ENCODE measurements at regions of chr4 and their contacts with region 1.

Region 1: DNA sequence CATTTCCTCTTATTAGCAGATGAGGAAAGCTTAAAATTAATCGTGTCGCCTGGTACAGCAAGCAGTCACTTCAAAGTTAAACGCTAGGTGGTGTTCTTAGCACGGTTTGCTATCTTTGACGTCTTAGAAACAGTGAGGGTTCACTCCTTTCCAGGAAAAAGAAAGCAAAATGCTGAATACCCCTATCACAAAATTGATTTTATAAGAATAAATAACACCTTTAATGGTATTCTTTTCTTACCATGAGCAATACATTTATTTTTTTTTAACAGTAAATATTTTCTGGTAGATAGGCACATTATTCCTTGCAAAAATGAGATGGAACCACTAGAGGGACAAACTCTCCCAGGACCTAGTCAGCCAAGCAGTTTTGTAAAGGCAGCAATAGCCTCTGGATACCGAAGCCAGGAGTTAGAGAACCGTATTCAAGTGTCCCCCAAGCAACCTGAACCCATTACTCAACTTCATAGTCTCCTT is 153.9 kb downstream of the KDR start:
- DNase-seq: no peak
- H3K4me3 ChIP-seq: no peak overlapping the region
- H3K27ac ChIP-seq: no peak overlapping the region
- H3K4me1 ChIP-seq: no peaks in the 10 kb centered on the region
- H3K27me3 ChIP-seq: no peaks in the 10 kb centered on the region
- CTCF ChIP-seq: peak; percentile 45

Region 2: GRCh38 chr4:54840992-54841768 is 130.3 kb before region 1 on chr4:
- intact Hi-C with region 1: no loop called
- DNase-seq: peak; percentile 18
- H3K4me3 ChIP-seq: no peak overlapping the region
- H3K27ac ChIP-seq: no peak overlapping the region
- H3K4me1 ChIP-seq: no peaks in the 10 kb centered on the region
- H3K27me3 ChIP-seq: no peaks in the 10 kb centered on the region
- CTCF ChIP-seq: no peak

Region 3: GRCh38 chr4:55169352-55169961 is 197.9 kb after region 1 on chr4:
- intact Hi-C with region 1: no loop called
- DNase-seq: peak; percentile 34
- H3K4me3 ChIP-seq: no peak overlapping the region
- H3K27ac ChIP-seq: no peak overlapping the region
- H3K4me1 ChIP-seq: no peaks in the 10 kb centered on the region
- H3K27me3 ChIP-seq: no peaks in the 10 kb centered on the region
- CTCF ChIP-seq: no peak

Region 4: GRCh38 chr4:55321707-55322264 is 350.3 kb after region 1 on chr4:
- intact Hi-C with region 1: loop called (anchors 10 kb)
- DNase-seq: peak; percentile 81
- H3K4me3 ChIP-seq: no peak overlapping the region
- H3K27ac ChIP-seq: no peak overlapping the region
- H3K4me1 ChIP-seq: no peaks in the 10 kb centered on the region
- H3K27me3 ChIP-seq: no peaks in the 10 kb centered on the region
- CTCF ChIP-seq: peak; percentile 44

Measured in colonic mucosa (tissue), 4 donors.